CD4-positive, alpha-beta memory T cell (primary cell): ENCODE measurements at regions of chr2 and their contacts with region 1.

Region 1: GRCh38 chr2:73736855-73737779 is at the start of gene TPRKB:
- DNase-seq: peak; percentile 93 to 95 (median 94)
- H3K4me3 ChIP-seq: peak within 1 kb of the TSS; percentile 43 to 74
- H3K4me3 Mint-ChIP-seq: peak within 1 kb of the TSS; percentile 90 to 98 (median 95)
- H3K27ac ChIP-seq: peak within 1 kb of the TSS; percentile 68
- H3K27ac Mint-ChIP-seq: peak within 1 kb of the TSS; percentile 85 to 96 (median 93)
- H3K4me1 ChIP-seq: peaks cover 24% of the 10 kb centered on the region
- H3K4me1 Mint-ChIP-seq: peaks cover 15 to 25% (median 19%) of the 10 kb centered on the region in 4 donors
- H3K27me3 ChIP-seq: no peaks in the 10 kb centered on the region
- H3K27me3 Mint-ChIP-seq: no peaks in the 10 kb centered on the region
- total RNA-seq, gene TPRKB: 31.7 to 33.0 TPM

Region 2: GRCh38 chr2:73385595-73386341 is 351.3 kb before region 1 on chr2 and contains the start of gene ALMS1:
- CTCF ChIA-PET with region 1: no interaction called
- POLR2A ChIA-PET with region 1: interaction called, 9 read pairs
- intact Hi-C with region 1: loop called (anchors 2 kb)
- DNase-seq: peak; percentile 86 to 91 (median 91)
- H3K4me3 ChIP-seq: peak within 1 kb of the TSS; percentile 62 to 79
- H3K4me3 Mint-ChIP-seq: peak within 1 kb of the TSS; percentile 91 to 93 (median 92)
- H3K27ac ChIP-seq: peak within 1 kb of the TSS; percentile 77
- H3K27ac Mint-ChIP-seq: peak within 1 kb of the TSS; percentile 96 to 99 (median 98)
- H3K4me1 ChIP-seq: peaks cover 25% of the 10 kb centered on the region
- H3K4me1 Mint-ChIP-seq: peaks cover 28 to 43% (median 34%) of the 10 kb centered on the region in 4 donors
- H3K27me3 ChIP-seq: no peaks in the 10 kb centered on the region
- H3K27me3 Mint-ChIP-seq: peaks cover 0 to 3% of the 10 kb centered on the region in 2 donors
- total RNA-seq, gene ALMS1: 35.5 to 42.9 TPM

Region 3: DNA sequence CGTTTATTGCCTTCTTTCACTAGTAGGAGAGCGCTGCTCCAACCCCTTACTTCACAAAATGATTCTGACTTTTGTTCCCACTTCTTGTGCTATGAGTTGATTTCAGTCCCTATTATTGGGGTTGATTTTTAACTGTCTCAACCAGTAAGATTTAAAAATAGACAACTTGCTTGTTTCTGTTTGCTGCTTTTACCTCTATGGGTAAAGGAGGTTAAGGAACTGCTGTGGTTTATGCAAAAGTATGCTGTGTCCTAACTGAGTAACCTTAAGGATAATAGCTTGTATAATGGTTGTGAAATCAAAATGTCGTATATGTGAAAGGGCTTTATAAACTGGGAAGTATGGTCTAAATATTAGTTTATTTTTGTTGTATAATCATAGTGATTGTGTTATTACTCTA is 328.9 kb before region 1 on chr2:
- CTCF ChIA-PET with region 1: no interaction called
- POLR2A ChIA-PET with region 1: no interaction called
- intact Hi-C with region 1: no loop called
- DNase-seq: no peak
- H3K4me3 ChIP-seq: no peak overlapping the region
- H3K4me3 Mint-ChIP-seq: no peak overlapping the region
- H3K27ac ChIP-seq: no peak overlapping the region
- H3K27ac Mint-ChIP-seq: no peak overlapping the region
- H3K4me1 ChIP-seq: no peaks in the 10 kb centered on the region
- H3K4me1 Mint-ChIP-seq: peaks cover 7 to 9% (median 8%) of the 10 kb centered on the region in 4 donors
- H3K27me3 ChIP-seq: no peaks in the 10 kb centered on the region
- H3K27me3 Mint-ChIP-seq: no peaks in the 10 kb centered on the region

Region 4: GRCh38 chr2:73779467-73780236 is 42.5 kb after region 1 on chr2 and contains the start of gene DUSP11:
- CTCF ChIA-PET with region 1: interaction called, 8 read pairs
- POLR2A ChIA-PET with region 1: interaction called, 17 read pairs
- intact Hi-C with region 1: loop called (anchors 1 kb)
- DNase-seq: peak; percentile 94 to 97 (median 95)
- H3K4me3 ChIP-seq: peak within 1 kb of the TSS; percentile 78 to 80
- H3K4me3 Mint-ChIP-seq: peak within 1 kb of the TSS; percentile 99 to 100 (median 99)
- H3K27ac ChIP-seq: peak within 1 kb of the TSS; percentile 94
- H3K27ac Mint-ChIP-seq: peak within 1 kb of the TSS; percentile 94 to 100 (median 99)
- H3K4me1 ChIP-seq: peaks cover 27% of the 10 kb centered on the region
- H3K4me1 Mint-ChIP-seq: peaks cover 9 to 43% (median 29%) of the 10 kb centered on the region in 4 donors
- H3K27me3 ChIP-seq: no peaks in the 10 kb centered on the region
- H3K27me3 Mint-ChIP-seq: peaks cover 4 to 6% of the 10 kb centered on the region in 2 donors
- total RNA-seq, gene DUSP11: 45.5 to 45.7 TPM

Region 5: DNA sequence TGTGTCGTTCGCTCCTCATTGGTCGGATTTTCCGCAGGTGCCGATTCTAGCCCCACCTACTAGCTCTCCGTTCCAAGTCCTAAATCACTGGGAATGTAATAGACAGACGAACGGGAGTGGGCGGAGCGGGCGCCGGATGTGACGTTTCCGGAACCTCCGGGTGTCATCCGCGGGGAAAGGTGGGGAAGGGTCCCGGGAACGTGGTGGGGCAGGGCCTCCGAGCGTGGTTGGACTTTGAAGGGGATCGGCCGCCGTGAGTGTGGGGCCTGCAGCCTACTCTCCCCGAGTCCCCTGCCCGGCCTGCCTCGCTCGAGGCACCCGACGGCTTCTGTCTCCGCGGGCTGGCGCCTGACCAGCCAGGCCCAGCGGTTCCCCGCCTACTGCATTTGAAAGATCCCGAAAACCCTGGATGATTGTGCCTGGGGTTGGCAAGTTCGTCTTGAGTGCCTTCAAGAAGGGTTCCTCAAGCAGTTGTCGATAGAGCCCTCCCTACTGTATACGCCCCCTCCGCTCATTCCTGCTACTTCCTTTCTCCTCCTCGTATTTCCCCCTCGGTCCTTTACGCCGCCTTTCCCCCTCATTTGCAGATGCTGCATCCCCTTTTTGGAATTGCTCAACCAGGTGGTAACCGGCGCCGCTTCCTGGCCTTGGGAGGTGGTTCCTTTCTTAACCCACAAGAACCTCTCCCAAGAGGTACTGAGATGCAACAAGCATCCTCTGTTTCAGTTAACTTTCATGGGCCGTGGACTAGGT is 91.9 kb after region 1 on chr2 and contains the start of gene STAMBP:
- CTCF ChIA-PET with region 1: interaction called, 4 read pairs
- POLR2A ChIA-PET with region 1: interaction called, 10 read pairs
- intact Hi-C with region 1: no loop called
- DNase-seq: peak; percentile 87 to 95 (median 91)
- H3K4me3 ChIP-seq: peak within 1 kb of the TSS; percentile 64 to 81
- H3K4me3 Mint-ChIP-seq: peak within 1 kb of the TSS; percentile 91 to 99 (median 96)
- H3K27ac ChIP-seq: peak within 1 kb of the TSS; percentile 92
- H3K27ac Mint-ChIP-seq: peak within 1 kb of the TSS; percentile 94 to 100 (median 98)
- H3K4me1 ChIP-seq: peaks cover 45% of the 10 kb centered on the region
- H3K4me1 Mint-ChIP-seq: peaks cover 34 to 49% (median 40%) of the 10 kb centered on the region in 4 donors
- H3K27me3 ChIP-seq: no peaks in the 10 kb centered on the region
- H3K27me3 Mint-ChIP-seq: no peaks in the 10 kb centered on the region
- total RNA-seq, gene STAMBP: 34.8 to 37.3 TPM

Region 6: GRCh38 chr2:74421221-74421870 is 684.2 kb after region 1 on chr2 and contains the starts of genes C2orf81 and WDR54:
- CTCF ChIA-PET with region 1: no interaction called
- POLR2A ChIA-PET with region 1: no interaction called
- intact Hi-C with region 1: loop called (anchors 1 kb)
- DNase-seq: peak; percentile 91 to 96 (median 95)
- H3K4me3 ChIP-seq: peak within 1 kb of the TSS; percentile 76 to 88
- H3K4me3 Mint-ChIP-seq: peak within 1 kb of the TSS; percentile 96 to 100 (median 98)
- H3K27ac ChIP-seq: peak within 1 kb of the TSS; percentile 93
- H3K27ac Mint-ChIP-seq: peak within 1 kb of the TSS; percentile 88 to 100 (median 99)
- H3K4me1 ChIP-seq: peaks cover 11% of the 10 kb centered on the region
- H3K4me1 Mint-ChIP-seq: peaks cover 12 to 30% (median 21%) of the 10 kb centered on the region in 4 donors
- H3K27me3 ChIP-seq: no peaks in the 10 kb centered on the region
- H3K27me3 Mint-ChIP-seq: no peaks in the 10 kb centered on the region
- total RNA-seq, gene C2orf81: 5.3 to 7.5 TPM
- total RNA-seq, gene WDR54: 36.3 to 41.0 TPM

Region 7: DNA sequence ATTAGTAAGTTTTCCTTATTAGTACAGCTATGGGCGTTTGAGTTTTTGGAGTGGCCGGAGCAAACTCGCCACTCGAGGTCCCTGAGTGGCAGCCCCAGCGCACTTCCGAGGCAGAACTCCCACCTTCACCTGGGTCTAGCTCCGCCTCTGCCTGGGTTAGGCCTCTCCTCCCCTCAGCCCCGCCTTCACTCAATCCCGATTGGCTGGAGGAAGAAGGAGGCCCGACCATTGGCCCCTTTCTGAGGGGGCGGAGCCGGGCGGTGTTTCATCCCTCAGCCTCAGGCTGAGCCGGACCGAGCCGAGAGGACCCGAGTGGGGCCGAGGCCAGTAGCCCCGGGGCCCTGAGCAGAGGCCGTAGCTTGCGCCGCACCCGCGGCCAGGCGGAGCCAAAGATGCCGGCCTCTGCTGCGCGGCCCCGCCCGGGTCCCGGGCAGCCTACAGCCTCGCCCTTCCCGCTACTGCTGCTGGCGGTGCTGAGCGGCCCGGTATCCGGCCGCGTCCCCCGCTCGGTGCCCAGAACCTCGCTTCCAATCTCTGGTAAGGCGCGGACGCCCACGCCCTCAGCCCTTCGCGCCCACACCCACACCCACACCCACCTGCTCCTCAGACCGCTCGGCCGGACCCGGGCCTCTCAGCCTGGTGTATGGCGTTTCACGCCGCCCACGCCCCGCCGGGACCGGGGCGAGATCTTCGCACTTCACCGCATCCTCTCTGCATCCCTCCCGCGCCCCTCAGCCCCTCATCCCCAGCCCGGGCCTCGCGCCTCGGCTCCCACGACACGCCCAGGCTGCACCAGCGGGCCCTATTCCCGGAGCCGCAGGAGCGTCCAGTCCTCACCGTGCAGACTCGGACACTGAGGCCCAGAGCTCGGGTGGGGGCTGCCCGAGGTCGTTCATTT is 917.1 kb after region 1 on chr2 and contains the start of gene SEMA4F:
- CTCF ChIA-PET with region 1: no interaction called
- POLR2A ChIA-PET with region 1: no interaction called
- intact Hi-C with region 1: loop called (anchors 5 kb)
- DNase-seq: peak; percentile 91 to 96 (median 94)
- H3K4me3 ChIP-seq: peak within 1 kb of the TSS; percentile 31 to 89
- H3K4me3 Mint-ChIP-seq: peak within 1 kb of the TSS; percentile 88 to 96 (median 92)
- H3K27ac ChIP-seq: peak within 1 kb of the TSS; percentile 58
- H3K27ac Mint-ChIP-seq: peak within 1 kb of the TSS; percentile 62 to 94 (median 90)
- H3K4me1 ChIP-seq: peaks cover 16% of the 10 kb centered on the region
- H3K4me1 Mint-ChIP-seq: peaks cover 13 to 29% (median 22%) of the 10 kb centered on the region in 4 donors
- H3K27me3 ChIP-seq: no peaks in the 10 kb centered on the region
- H3K27me3 Mint-ChIP-seq: peaks cover 2 to 4% of the 10 kb centered on the region in 2 donors
- total RNA-seq, gene SEMA4F: 19.5 to 21.6 TPM